Mammary epithelial cell (primary cell): ENCODE measurements at regions of chr2 and their contacts with region 1.

Region 1: GRCh38 chr2:37672104-37672869 is 845 bp upstream of the CDC42EP3 start:
- DNase-seq: peak; percentile 90
- H3K4me3 ChIP-seq: peak overlapping the region; percentile 88 to 96 (median 93)
- H3K27ac ChIP-seq: peak overlapping the region; percentile 65
- H3K4me1 ChIP-seq: peaks cover 44% of the 10 kb centered on the region
- H3K27me3 ChIP-seq: no peaks in the 10 kb centered on the region
- CTCF ChIP-seq: no peak

Region 2: GRCh38 chr2:37585982-37586621 is 86.2 kb before region 1 on chr2:
- CTCF ChIA-PET with region 1: no interaction called
- dilution Hi-C with region 1: no loop called
- in situ Hi-C with region 1: no loop called
- intact Hi-C with region 1: loop called (anchors 2 kb)
- DNase-seq: peak; percentile 94
- H3K4me3 ChIP-seq: no peak overlapping the region
- H3K27ac ChIP-seq: peak overlapping the region; percentile 50
- H3K4me1 ChIP-seq: peaks cover 77% of the 10 kb centered on the region
- H3K27me3 ChIP-seq: no peaks in the 10 kb centered on the region
- CTCF ChIP-seq: no peak

Region 3: GRCh38 chr2:37600735-37601134 is 71.6 kb before region 1 on chr2:
- CTCF ChIA-PET with region 1: no interaction called
- dilution Hi-C with region 1: no loop called
- in situ Hi-C with region 1: no loop called
- intact Hi-C with region 1: no loop called
- DNase-seq: no peak
- H3K4me3 ChIP-seq: no peak overlapping the region
- H3K27ac ChIP-seq: no peak overlapping the region
- H3K4me1 ChIP-seq: peaks cover 10% of the 10 kb centered on the region
- H3K27me3 ChIP-seq: no peaks in the 10 kb centered on the region
- CTCF ChIP-seq: no peak

Region 4: DNA sequence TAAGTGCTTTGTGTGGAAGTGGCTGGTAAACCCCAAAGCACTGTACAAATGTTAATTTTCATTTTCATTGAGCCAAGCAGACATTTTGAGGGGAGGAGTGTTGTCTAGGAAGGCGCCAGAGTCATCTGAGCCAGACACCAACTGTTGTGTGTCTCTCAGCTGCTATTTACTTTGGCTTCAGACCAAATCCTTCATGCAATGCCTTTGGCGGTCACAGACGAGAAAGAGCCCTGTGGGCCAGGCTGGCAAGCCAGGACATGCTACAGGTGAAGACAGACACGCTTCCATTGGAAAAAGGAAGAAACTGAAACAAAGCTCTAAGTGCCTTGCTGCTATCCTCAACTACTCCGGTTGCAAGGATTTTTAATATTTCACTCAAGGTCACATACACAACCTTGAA is 114.6 kb after region 1 on chr2:
- CTCF ChIA-PET with region 1: no interaction called
- dilution Hi-C with region 1: loop called (anchors 5 kb)
- in situ Hi-C with region 1: no loop called
- intact Hi-C with region 1: no loop called
- DNase-seq: peak; percentile 95
- H3K4me3 ChIP-seq: no peak overlapping the region
- H3K27ac ChIP-seq: peak overlapping the region; percentile 31
- H3K4me1 ChIP-seq: peaks cover 33% of the 10 kb centered on the region
- H3K27me3 ChIP-seq: no peaks in the 10 kb centered on the region
- CTCF ChIP-seq: no peak

Region 5: GRCh38 chr2:37832590-37833197 is 160.4 kb after region 1 on chr2:
- CTCF ChIA-PET with region 1: no interaction called
- dilution Hi-C with region 1: no loop called
- in situ Hi-C with region 1: no loop called
- intact Hi-C with region 1: loop called (anchors 1 kb)
- DNase-seq: peak; percentile 73
- H3K4me3 ChIP-seq: no peak overlapping the region
- H3K27ac ChIP-seq: no peak overlapping the region
- H3K4me1 ChIP-seq: no peaks in the 10 kb centered on the region
- H3K27me3 ChIP-seq: no peaks in the 10 kb centered on the region
- CTCF ChIP-seq: peak; percentile 75 to 87